ENCODE measurements at regions of chr12 and their contacts with region 1.

Region 1: GRCh38 chr12:55073043-55074022 is 52.9 kb upstream of the OR9K2 start:
- DNase-seq: peak; percentile 23
- H3K4me3 ChIP-seq: no peak overlapping the region
- CTCF ChIP-seq: peak; percentile 75

Region 2: GRCh38 chr12:55049676-55050075 is 23.7 kb before region 1 on chr12:
- CTCF ChIA-PET with region 1: interaction called, 14 read pairs
- POLR2A ChIA-PET with region 1: no interaction called
- DNase-seq: no peak
- H3K4me3 ChIP-seq: no peak overlapping the region
- CTCF ChIP-seq: no peak

Region 3: GRCh38 chr12:55060470-55060869 is 12.9 kb before region 1 on chr12:
- CTCF ChIA-PET with region 1: interaction called, 14 read pairs
- POLR2A ChIA-PET with region 1: no interaction called
- DNase-seq: no peak
- H3K4me3 ChIP-seq: no peak overlapping the region
- CTCF ChIP-seq: no peak